ENCODE measurements at regions of chr21 and their contacts with region 1.

Region 1: GRCh38 chr21:33324291-33325221 is at the start of gene IFNAR1:
- DNase-seq: peak; percentile 99 to 100
- ATAC-seq: peak; percentile 100
- H3K4me3 ChIP-seq: peak within 1 kb of the TSS; percentile 79 to 89
- H3K27ac ChIP-seq: peak within 1 kb of the TSS; percentile 24 to 93
- H3K4me1 ChIP-seq: no peaks in the 10 kb centered on the region
- H3K27me3 ChIP-seq: no peaks in the 10 kb centered on the region
- total RNA-seq, gene IFNAR1: 45.6 to 59.3 TPM

Region 2: GRCh38 chr21:33266050-33266788 is 58.3 kb before region 1 on chr21 and contains the start of gene IL10RB:
- intact Hi-C with region 1: loop called in 1 of 2 experiments (anchors 2 kb)
- DNase-seq: peak; percentile 84 to 91
- ATAC-seq: peak; percentile 94
- H3K4me3 ChIP-seq: peak within 1 kb of the TSS; percentile 57 to 75
- H3K27ac ChIP-seq: peak within 1 kb of the TSS; percentile 3 to 75
- H3K4me1 ChIP-seq: no peaks in the 10 kb centered on the region
- H3K27me3 ChIP-seq: no peaks in the 10 kb centered on the region
- total RNA-seq, gene IL10RB: 19.4 to 28.4 TPM

Region 3: GRCh38 chr21:33380483-33380998 is 56.0 kb after region 1 on chr21:
- intact Hi-C with region 1: loop called in 1 of 2 experiments (anchors 10 kb)
- DNase-seq: peak; percentile 96 to 97
- ATAC-seq: peak; percentile 94
- H3K4me3 ChIP-seq: no peak overlapping the region
- H3K27ac ChIP-seq: peak overlapping the region; percentile 34 to 47
- H3K4me1 ChIP-seq: no peaks in the 10 kb centered on the region
- H3K27me3 ChIP-seq: no peaks in the 10 kb centered on the region

Region 4: GRCh38 chr21:33441489-33442477 is 117.2 kb after region 1 on chr21:
- intact Hi-C with region 1: loop called in 1 of 2 experiments (anchors 10 kb)
- DNase-seq: peak in 1 of 2 donors; percentile 68
- ATAC-seq: peak; percentile 37
- H3K4me3 ChIP-seq: no peak overlapping the region
- H3K27ac ChIP-seq: peak overlapping the region in 1 of 2 donors; percentile 5
- H3K4me1 ChIP-seq: no peaks in the 10 kb centered on the region
- H3K27me3 ChIP-seq: no peaks in the 10 kb centered on the region

Measured in aorta (tissue), 5 donors.